Transverse colon (tissue), 4 donors: ENCODE measurements at regions of chr16 and their contacts with region 1.

Region 1: GRCh38 chr16:68823401-68824135 is 19.8 kb upstream of the TANGO6 start:
- DNase-seq: no peak
- H3K4me3 ChIP-seq: no peak overlapping the region
- H3K27ac ChIP-seq: no peak overlapping the region
- H3K4me1 ChIP-seq: no peaks in the 10 kb centered on the region
- H3K27me3 ChIP-seq: no peaks in the 10 kb centered on the region
- CTCF ChIP-seq: no peak
- EP300 ChIP-seq: no peak
- POLR2A ChIP-seq: no peak

Region 2: GRCh38 chr16:68754117-68754792 is 69.3 kb before region 1 on chr16:
- in situ Hi-C with region 1: no loop called
- intact Hi-C with region 1: loop called (anchors 2 kb)
- DNase-seq: peak; percentile 72
- H3K4me3 ChIP-seq: no peak overlapping the region
- H3K27ac ChIP-seq: peak overlapping the region; percentile 86 to 91 (median 89)
- H3K4me1 ChIP-seq: peaks cover 5 to 80% (median 40%) of the 10 kb centered on the region in 4 donors
- H3K27me3 ChIP-seq: no peaks in the 10 kb centered on the region
- CTCF ChIP-seq: no peak
- EP300 ChIP-seq: no peak
- POLR2A ChIP-seq: peak; percentile 74